OCI-LY7 (cell line): ENCODE measurements at regions of chr1 and their contacts with region 1.

Region 1: GRCh38 chr1:192066202-192066601 is 92.1 kb upstream of the RGS18 start:
- DNase-seq: no peak
- H3K4me3 ChIP-seq: no peak overlapping the region
- H3K27ac ChIP-seq: no peak overlapping the region
- H3K4me1 ChIP-seq: no peaks in the 10 kb centered on the region
- CTCF ChIP-seq: no peak

Region 2: GRCh38 chr1:192011525-192011924 is 54.7 kb before region 1 on chr1:
- CTCF ChIA-PET with region 1: no interaction called
- POLR2A ChIA-PET with region 1: interaction called, 12 read pairs
- intact Hi-C with region 1: no loop called
- DNase-seq: no peak
- H3K4me3 ChIP-seq: no peak overlapping the region
- H3K27ac ChIP-seq: no peak overlapping the region
- H3K4me1 ChIP-seq: no peaks in the 10 kb centered on the region
- CTCF ChIP-seq: no peak

Region 3: GRCh38 chr1:192133350-192133926 is 67.2 kb after region 1 on chr1:
- CTCF ChIA-PET with region 1: no interaction called
- POLR2A ChIA-PET with region 1: no interaction called
- intact Hi-C with region 1: no loop called
- DNase-seq: no peak
- H3K4me3 ChIP-seq: no peak overlapping the region
- H3K27ac ChIP-seq: no peak overlapping the region
- H3K4me1 ChIP-seq: no peaks in the 10 kb centered on the region
- CTCF ChIP-seq: no peak